ENCODE measurements at regions of chr1 and their contacts with region 1.

Region 1: GRCh38 chr1:75725861-75726361 is 1.4 kb downstream of the ACADM start:
- DNase-seq: no peak

Region 2: GRCh38 chr1:75502776-75503175 is 223.1 kb before region 1 on chr1:
- intact Hi-C with region 1: no loop called
- DNase-seq: no peak

Region 3: GRCh38 chr1:75785983-75786853 is 60.3 kb after region 1 on chr1 and contains the start of gene RABGGTB:
- intact Hi-C with region 1: loop called (anchors 2 kb)
- DNase-seq: peak; percentile 97
- total RNA-seq, gene RABGGTB: 62.1 TPM